ENCODE measurements at regions of chr2 and their contacts with region 1.

Region 1: GRCh38 chr2:47767880-47768609 is 14.9 kb upstream of the MSH6 start:
- DNase-seq: peak; percentile 90
- ATAC-seq: peak; percentile 92
- H3K4me3 Mint-ChIP-seq: no peak overlapping the region
- H3K27ac Mint-ChIP-seq: no peak overlapping the region
- H3K4me1 Mint-ChIP-seq: peaks cover 20% of the 10 kb centered on the region
- H3K27me3 Mint-ChIP-seq: no peaks in the 10 kb centered on the region
- CTCF ChIP-seq: peak; percentile 99

Region 2: GRCh38 chr2:47520825-47521665 is 247.0 kb before region 1 on chr2:
- CTCF ChIA-PET with region 1: interaction called, 15 read pairs
- POLR2A ChIA-PET with region 1: no interaction called
- DNase-seq: peak; percentile 62
- ATAC-seq: peak; percentile 69
- H3K4me3 Mint-ChIP-seq: peak overlapping the region; percentile 45
- H3K27ac Mint-ChIP-seq: no peak overlapping the region
- H3K4me1 Mint-ChIP-seq: peaks cover 21% of the 10 kb centered on the region
- H3K27me3 Mint-ChIP-seq: peaks cover 3% of the 10 kb centered on the region; the same call in 1 of the 2 replicates
- CTCF ChIP-seq: no peak; the same call in 1 of the 2 replicates

Region 3: GRCh38 chr2:47558768-47559684 is 209.0 kb before region 1 on chr2:
- CTCF ChIA-PET with region 1: interaction called, 11 read pairs
- POLR2A ChIA-PET with region 1: interaction called, 12 read pairs
- DNase-seq: no peak
- ATAC-seq: peak; percentile 65
- H3K4me3 Mint-ChIP-seq: no peak overlapping the region
- H3K27ac Mint-ChIP-seq: peak overlapping the region; percentile 42
- H3K4me1 Mint-ChIP-seq: peaks cover 5% of the 10 kb centered on the region; the same call in 1 of the 2 replicates
- H3K27me3 Mint-ChIP-seq: no peaks in the 10 kb centered on the region
- CTCF ChIP-seq: no peak

Region 4: GRCh38 chr2:47782671-47783485 is 14.8 kb after region 1 on chr2 and contains the start of gene MSH6:
- CTCF ChIA-PET with region 1: interaction called, 16 read pairs
- POLR2A ChIA-PET with region 1: interaction called, 3 read pairs
- DNase-seq: peak; percentile 86
- ATAC-seq: peak; percentile 76
- H3K4me3 Mint-ChIP-seq: peak within 1 kb of the TSS; percentile 84
- H3K27ac Mint-ChIP-seq: peak within 1 kb of the TSS; percentile 84
- H3K4me1 Mint-ChIP-seq: peaks cover 28% of the 10 kb centered on the region
- H3K27me3 Mint-ChIP-seq: peaks cover 3% of the 10 kb centered on the region; the same call in 1 of the 2 replicates
- CTCF ChIP-seq: no peak
- total RNA-seq, gene MSH6: 235 to 275 TPM (median 247 TPM) in 3 replicates

Measured in WTC11 (cell line).